OCI-LY7 (cell line): ENCODE measurements at regions of chr12 and their contacts with region 1.

Region 1: DNA sequence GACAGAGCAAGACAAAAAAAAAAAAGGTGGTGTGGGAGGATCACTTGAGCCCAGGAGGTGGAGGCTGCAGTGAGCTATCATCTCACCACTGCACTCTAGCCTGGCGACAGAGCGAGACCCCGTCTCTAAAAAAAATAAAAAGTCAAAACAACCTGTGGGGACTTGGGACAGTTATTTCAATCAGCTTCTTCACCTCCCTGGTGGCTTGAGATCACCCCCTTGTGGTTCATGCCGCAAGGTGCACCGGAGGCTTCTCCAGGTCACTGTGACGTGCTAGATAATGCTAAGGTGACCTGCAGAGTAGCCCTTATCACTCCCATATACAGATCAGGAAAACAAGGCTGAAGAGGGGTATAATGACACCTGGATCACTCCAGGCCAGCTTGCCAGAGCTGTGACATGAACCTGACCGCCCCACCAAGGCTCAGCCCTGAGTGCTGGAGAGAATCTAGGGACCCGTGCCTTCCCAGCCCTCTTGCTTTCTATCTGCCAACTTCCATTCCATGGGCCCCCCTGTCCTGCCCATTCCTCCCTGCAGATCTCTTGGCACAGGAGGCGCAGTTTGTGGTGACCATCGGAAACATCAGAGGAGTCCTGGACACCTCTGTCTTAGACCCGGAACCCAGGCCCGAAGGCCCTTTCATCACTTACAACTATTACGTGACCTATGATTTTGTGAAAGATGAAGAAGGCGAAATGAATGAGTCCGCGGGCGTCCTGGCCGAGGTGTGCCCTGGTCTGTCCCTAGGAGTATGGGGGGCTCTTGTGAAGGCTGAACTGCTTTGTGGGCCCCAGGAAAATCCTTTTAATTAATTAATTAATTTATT is 8.1 kb downstream of the LRRC43 start:
- DNase-seq: peak; percentile 79
- H3K4me3 ChIP-seq: no peak overlapping the region
- H3K27ac ChIP-seq: no peak overlapping the region
- H3K4me1 ChIP-seq: no peaks in the 10 kb centered on the region
- CTCF ChIP-seq: peak; percentile 92

Region 2: GRCh38 chr12:122051231-122051876 is 139.7 kb before region 1 on chr12:
- CTCF ChIA-PET with region 1: no interaction called
- POLR2A ChIA-PET with region 1: no interaction called
- intact Hi-C with region 1: loop called (anchors 5 kb)
- DNase-seq: no peak
- H3K4me3 ChIP-seq: no peak overlapping the region
- H3K27ac ChIP-seq: no peak overlapping the region
- H3K4me1 ChIP-seq: no peaks in the 10 kb centered on the region
- CTCF ChIP-seq: no peak

Region 3: GRCh38 chr12:122152754-122153153 is 38.3 kb before region 1 on chr12:
- CTCF ChIA-PET with region 1: no interaction called
- POLR2A ChIA-PET with region 1: no interaction called
- intact Hi-C with region 1: loop called (anchors 5 kb)
- DNase-seq: no peak
- H3K4me3 ChIP-seq: no peak overlapping the region
- H3K27ac ChIP-seq: no peak overlapping the region
- H3K4me1 ChIP-seq: no peaks in the 10 kb centered on the region
- CTCF ChIP-seq: no peak

Region 4: GRCh38 chr12:122318607-122319605 is 127.9 kb after region 1 on chr12:
- CTCF ChIA-PET with region 1: no interaction called
- POLR2A ChIA-PET with region 1: no interaction called
- intact Hi-C with region 1: no loop called
- DNase-seq: no peak
- H3K4me3 ChIP-seq: no peak overlapping the region
- H3K27ac ChIP-seq: no peak overlapping the region
- H3K4me1 ChIP-seq: no peaks in the 10 kb centered on the region
- CTCF ChIP-seq: no peak